Activated T-helper 2 cell treated with anti-CD3 and anti-CD28 coated beads, Interferon-gamma antibody, Interleukin-2, Interleukin-4, amounts not matched to agents 10 μg/mL and 5 μg/mL and 100 μg/mL, durations not matched to agents 14 hours and 24 hours and 36 hours (primary cell): ENCODE measurements at regions of chr4 and their contacts with region 1.

Region 1: DNA sequence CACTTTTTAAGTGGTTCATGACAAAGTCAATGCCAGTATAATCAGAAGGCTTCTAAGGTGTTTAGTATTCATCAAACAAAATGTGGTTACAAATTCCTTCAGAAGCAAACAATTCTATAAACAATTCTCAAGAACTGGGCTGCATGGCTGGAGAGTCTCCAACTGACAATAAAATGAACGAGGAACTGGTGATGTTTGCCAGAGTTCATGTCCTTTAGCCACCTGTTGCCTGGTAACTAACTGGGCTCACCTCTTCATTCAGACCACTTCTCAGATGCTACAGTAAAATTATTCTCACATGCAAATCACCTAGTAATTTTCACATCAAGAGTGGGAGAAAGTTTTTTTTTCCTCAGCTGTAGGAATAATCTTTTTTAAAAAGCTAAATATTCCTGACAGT is 53.3 kb downstream of the CAMK2D start:
- DNase-seq: no peak
- H3K4me3 Mint-ChIP-seq: no peak overlapping the region
- H3K27ac Mint-ChIP-seq: no peak overlapping the region
- H3K4me1 Mint-ChIP-seq: peaks cover 27% of the 10 kb centered on the region
- H3K27me3 Mint-ChIP-seq: no peaks in the 10 kb centered on the region

Region 2: GRCh38 chr4:113744667-113745240 is 36.5 kb after region 1 on chr4:
- intact Hi-C with region 1: loop called (anchors 5 kb)
- DNase-seq: no peak
- H3K4me3 Mint-ChIP-seq: no peak overlapping the region
- H3K27ac Mint-ChIP-seq: no peak overlapping the region
- H3K4me1 Mint-ChIP-seq: peaks cover 23% of the 10 kb centered on the region
- H3K27me3 Mint-ChIP-seq: no peaks in the 10 kb centered on the region